Right ventricle myocardium inferior (tissue), 1 donor: ENCODE measurements at regions of chrX and their contacts with region 1.

Region 1: DNA sequence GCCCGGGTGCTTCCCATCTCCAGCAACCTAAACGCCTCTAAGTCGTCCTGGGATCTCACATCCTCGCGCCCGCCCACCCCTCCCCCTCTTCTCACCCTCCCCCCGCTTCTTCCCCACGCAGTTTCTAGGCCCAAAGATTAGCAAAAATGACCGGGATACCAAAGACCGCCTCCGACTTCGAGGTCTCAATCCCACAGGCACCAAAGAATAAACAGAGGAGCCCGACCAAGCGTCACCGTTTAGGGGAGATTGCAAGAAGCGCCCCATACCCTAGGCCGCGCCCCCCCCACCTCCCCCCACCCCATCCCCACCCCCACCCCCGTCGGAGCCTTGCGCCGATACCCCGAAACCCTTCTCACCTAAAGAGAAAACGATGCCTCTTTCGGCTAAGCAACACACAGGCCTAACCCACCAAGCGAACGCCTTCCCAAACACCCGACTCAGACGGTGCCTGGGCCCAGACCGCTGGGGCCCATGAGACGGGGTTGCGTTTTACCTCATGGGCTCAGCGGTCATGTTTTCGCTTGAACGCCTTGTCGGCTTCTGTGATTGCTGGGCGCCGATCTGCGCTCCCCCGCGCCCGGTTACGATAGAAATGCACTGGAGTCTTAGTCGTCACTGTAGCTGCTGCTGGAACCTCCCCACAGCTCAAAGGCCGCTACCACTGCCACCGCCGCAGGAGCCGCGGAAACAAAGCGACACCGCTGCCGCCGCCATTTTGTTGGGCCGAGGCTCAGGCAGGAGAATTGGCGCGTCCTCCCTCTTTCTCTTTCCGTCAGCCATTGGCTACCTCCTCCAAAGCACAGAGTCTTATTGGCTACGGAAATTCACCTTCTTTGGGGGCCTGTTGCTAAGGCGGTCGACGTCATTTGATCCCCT is at the start of gene ATRX:
- DNase-seq: peak; percentile 73
- ATAC-seq: peak; percentile 96
- total RNA-seq, gene ATRX: 74.8 TPM

Region 2: GRCh38 chrX:77668391-77669237 is 117.1 kb before region 1 on chrX:
- intact Hi-C with region 1: loop called (anchors 10 kb)
- DNase-seq: no peak
- ATAC-seq: no peak